ENCODE measurements at regions of chr11 and their contacts with region 1.

Region 1: DNA sequence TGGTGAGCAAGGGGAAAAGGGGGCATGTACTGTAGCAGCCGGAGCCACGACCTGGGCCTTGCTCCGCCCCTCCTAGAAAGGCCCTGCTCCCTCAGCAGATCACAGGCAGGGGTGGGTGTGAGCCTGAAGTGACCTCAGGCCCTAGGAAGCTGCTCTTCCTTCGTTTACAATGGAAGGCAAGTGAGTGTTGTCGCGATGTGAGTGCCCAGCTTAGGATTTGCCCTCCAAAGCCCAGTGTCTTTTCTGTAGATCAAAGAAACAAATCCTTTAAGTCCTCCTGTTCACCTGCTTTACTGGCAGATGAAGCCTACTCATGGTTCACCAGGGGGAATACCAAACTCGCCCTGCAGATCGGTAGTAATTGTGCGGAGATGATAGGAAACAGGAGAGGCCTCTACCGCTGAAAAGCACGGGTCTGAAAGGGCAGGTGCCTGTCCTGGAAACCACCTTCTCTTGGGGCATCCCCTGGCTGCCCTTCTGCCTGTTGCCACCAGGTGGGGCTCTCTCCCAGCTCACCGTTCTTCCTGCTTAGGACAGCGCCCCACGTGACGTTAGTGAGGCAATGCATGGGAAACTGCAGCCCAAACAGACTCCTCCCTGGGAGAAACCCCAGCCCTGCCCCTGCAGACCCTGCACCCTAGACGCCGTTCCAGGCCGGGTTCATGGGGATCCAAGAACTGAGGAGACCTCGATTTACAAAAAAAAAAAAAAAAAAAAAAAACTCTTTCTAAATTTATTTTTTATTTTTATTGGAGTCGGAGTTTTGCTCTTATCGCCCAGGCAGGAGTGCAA is 45.9 kb upstream of the RAB1B start:
- DNase-seq: peak; percentile 89
- ATAC-seq: peak; percentile 98
- H3K4me3 ChIP-seq: no peak overlapping the region
- H3K27ac ChIP-seq: no peak overlapping the region
- H3K4me1 ChIP-seq: no peaks in the 10 kb centered on the region
- H3K27me3 ChIP-seq: no peaks in the 10 kb centered on the region
- CTCF ChIP-seq: peak; percentile 100
- POLR2A ChIP-seq: no peak; the same call in 1 of the 2 replicates
- RAD21 ChIP-seq: peak; percentile 89

Region 2: DNA sequence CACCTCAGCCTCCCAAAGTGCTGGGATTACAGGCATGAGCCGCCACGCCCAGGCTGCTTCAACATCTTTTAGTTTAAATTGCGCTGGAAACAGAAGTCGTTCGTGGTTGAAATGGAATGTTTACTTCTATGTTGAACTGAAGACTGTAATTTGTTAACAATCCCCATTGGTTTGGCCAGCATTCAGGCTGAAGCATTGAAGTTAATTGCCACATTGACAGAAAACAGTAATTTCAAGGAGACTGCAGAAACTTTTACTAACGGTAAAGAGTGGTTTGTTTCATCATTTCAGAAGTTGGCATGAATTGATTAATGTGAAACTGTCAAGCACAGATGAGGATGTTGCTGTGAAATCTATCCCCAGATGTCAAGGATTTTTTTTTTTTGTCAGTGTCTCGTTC is 456.0 kb before region 1 on chr11:
- CTCF ChIA-PET with region 1: no interaction called
- POLR2A ChIA-PET with region 1: no interaction called
- dilution Hi-C with region 1: no loop called
- in situ Hi-C with region 1: no loop called
- intact Hi-C with region 1: no loop called
- DNase-seq: peak; percentile 6
- ATAC-seq: 0 out of 2 replicates have a peak, but pooled peaks have one; percentile 11
- H3K4me3 ChIP-seq: no peak overlapping the region
- H3K27ac ChIP-seq: no peak overlapping the region
- H3K4me1 ChIP-seq: no peaks in the 10 kb centered on the region
- H3K27me3 ChIP-seq: no peaks in the 10 kb centered on the region
- CTCF ChIP-seq: no peak
- POLR2A ChIP-seq: no peak
- RAD21 ChIP-seq: no peak

Region 3: GRCh38 chr11:65932558-65932919 is 290.0 kb before region 1 on chr11:
- CTCF ChIA-PET with region 1: no interaction called
- POLR2A ChIA-PET with region 1: no interaction called
- dilution Hi-C with region 1: no loop called
- in situ Hi-C with region 1: no loop called
- intact Hi-C with region 1: no loop called
- DNase-seq: no peak
- ATAC-seq: peak; percentile 46
- H3K4me3 ChIP-seq: no peak overlapping the region
- H3K27ac ChIP-seq: no peak overlapping the region
- H3K4me1 ChIP-seq: peaks cover 4% of the 10 kb centered on the region; the same call in 1 of the 2 replicates
- H3K27me3 ChIP-seq: no peaks in the 10 kb centered on the region
- CTCF ChIP-seq: peak; percentile 3; the same call in 1 of the 2 replicates
- POLR2A ChIP-seq: no peak
- RAD21 ChIP-seq: no peak

Region 4: DNA sequence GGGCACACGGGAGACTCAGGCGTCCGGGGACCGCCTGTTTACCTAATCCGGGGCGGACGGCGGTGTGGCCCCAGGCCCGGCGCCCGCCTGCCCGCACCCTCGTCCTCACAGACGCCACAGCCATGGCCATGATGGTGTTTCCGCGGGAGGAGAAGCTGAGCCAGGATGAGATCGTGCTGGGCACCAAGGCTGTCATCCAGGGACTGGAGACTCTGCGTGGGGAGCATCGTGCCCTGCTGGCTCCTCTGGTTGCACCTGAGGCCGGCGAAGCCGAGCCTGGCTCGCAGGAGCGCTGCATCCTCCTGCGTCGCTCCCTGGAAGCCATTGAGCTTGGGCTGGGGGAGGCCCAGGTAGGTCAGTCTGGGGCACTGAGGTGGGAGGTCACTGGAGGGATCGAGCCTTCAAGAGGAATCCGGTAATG is 35.9 kb after region 1 on chr11:
- CTCF ChIA-PET with region 1: interaction called, 3 read pairs
- POLR2A ChIA-PET with region 1: no interaction called
- dilution Hi-C with region 1: no loop called
- in situ Hi-C with region 1: no loop called
- intact Hi-C with region 1: loop called (anchors 2 kb)
- DNase-seq: no peak
- ATAC-seq: peak; percentile 4
- H3K4me3 ChIP-seq: peak overlapping the region; percentile 72
- H3K27ac ChIP-seq: peak overlapping the region; percentile 72
- H3K4me1 ChIP-seq: peaks cover 8% of the 10 kb centered on the region; the same call in 1 of the 2 replicates
- H3K27me3 ChIP-seq: no peaks in the 10 kb centered on the region
- CTCF ChIP-seq: no peak
- POLR2A ChIP-seq: no peak
- RAD21 ChIP-seq: no peak

Region 5: DNA sequence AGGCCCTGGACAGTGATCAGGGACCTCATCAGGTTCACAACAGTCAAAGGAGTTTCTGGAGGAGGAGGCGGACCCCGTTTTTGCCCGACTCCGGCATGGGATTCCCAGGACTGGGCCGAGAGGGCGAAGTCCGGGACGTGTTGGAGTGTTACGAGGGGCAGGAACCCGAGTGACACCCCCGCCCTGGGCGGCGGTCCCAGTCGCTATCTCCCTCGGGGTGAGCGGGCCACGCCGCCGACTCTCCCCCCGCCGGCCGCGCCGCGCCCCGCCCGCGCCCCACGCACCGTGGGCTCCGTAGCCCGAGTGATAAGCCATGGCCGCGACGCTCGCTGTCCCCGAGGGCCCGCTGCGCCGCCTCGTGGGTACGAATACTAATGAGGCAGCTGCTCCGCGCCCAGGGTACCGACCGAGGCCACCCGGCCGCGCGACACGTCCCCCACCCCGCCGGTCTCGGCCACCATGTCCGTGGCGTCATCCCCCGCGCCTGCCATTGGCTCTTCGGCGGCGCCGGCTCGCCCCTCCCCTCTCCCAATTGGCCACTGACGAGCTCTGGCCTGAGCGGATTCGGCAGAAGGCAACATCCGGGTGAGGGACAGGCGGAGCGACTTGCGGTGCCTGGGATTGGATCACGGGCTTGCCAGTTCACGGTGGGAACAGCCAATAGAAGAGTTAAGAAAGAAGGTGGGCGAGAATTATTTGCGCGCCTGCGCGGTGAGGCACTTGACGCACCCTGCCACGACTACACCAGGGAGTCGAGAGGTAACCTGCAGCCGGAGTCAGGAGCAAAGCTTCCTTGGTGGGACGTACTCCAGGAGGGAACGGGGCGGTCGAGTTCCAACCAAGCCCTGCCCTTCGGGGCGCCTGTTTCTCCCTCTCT is 66.4 kb after region 1 on chr11 and contains the start of gene YIF1A:
- CTCF ChIA-PET with region 1: no interaction called
- POLR2A ChIA-PET with region 1: no interaction called
- dilution Hi-C with region 1: no loop called
- in situ Hi-C with region 1: no loop called
- intact Hi-C with region 1: loop called (anchors 2 kb)
- DNase-seq: peak; percentile 100
- ATAC-seq: peak; percentile 95
- H3K4me3 ChIP-seq: peak within 1 kb of the TSS; percentile 69
- H3K27ac ChIP-seq: peak within 1 kb of the TSS; percentile 86
- H3K4me1 ChIP-seq: peaks cover 11% of the 10 kb centered on the region
- H3K27me3 ChIP-seq: peaks cover 29% of the 10 kb centered on the region
- CTCF ChIP-seq: no peak
- POLR2A ChIP-seq: peak; percentile 97
- RAD21 ChIP-seq: no peak
- total RNA-seq, gene YIF1A: 128 and 134 TPM in 2 replicates

Region 6: GRCh38 chr11:66328307-66329144 is 106.0 kb after region 1 on chr11:
- CTCF ChIA-PET with region 1: no interaction called
- POLR2A ChIA-PET with region 1: no interaction called
- dilution Hi-C with region 1: no loop called
- in situ Hi-C with region 1: no loop called
- intact Hi-C with region 1: loop called (anchors 1 kb)
- DNase-seq: peak; percentile 70
- ATAC-seq: peak; percentile 73
- H3K4me3 ChIP-seq: no peak overlapping the region
- H3K27ac ChIP-seq: peak overlapping the region; percentile 95
- H3K4me1 ChIP-seq: peaks cover 43% of the 10 kb centered on the region
- H3K27me3 ChIP-seq: no peaks in the 10 kb centered on the region
- CTCF ChIP-seq: peak; percentile 92
- POLR2A ChIP-seq: peak; percentile 40
- RAD21 ChIP-seq: peak; percentile 84

Region 7: GRCh38 chr11:66336234-66337102 is 113.9 kb after region 1 on chr11 and contains the start of gene RIN1:
- CTCF ChIA-PET with region 1: no interaction called
- POLR2A ChIA-PET with region 1: no interaction called
- dilution Hi-C with region 1: no loop called
- in situ Hi-C with region 1: no loop called
- intact Hi-C with region 1: loop called (anchors 1 kb)
- DNase-seq: peak; percentile 99
- ATAC-seq: peak; percentile 86
- H3K4me3 ChIP-seq: peak within 1 kb of the TSS; percentile 60
- H3K27ac ChIP-seq: peak within 1 kb of the TSS; percentile 89
- H3K4me1 ChIP-seq: peaks cover 23% of the 10 kb centered on the region
- H3K27me3 ChIP-seq: no peaks in the 10 kb centered on the region
- CTCF ChIP-seq: peak; percentile 47
- POLR2A ChIP-seq: peak; percentile 97
- RAD21 ChIP-seq: peak; percentile 29; the same call in 1 of the 2 replicates
- total RNA-seq, gene RIN1: 9.9 and 10.6 TPM in 2 replicates

Measured in IMR-90 (cell line).